Natural killer cell (primary cell): ENCODE measurements at regions of chr15 and their contacts with region 1.

Region 1: DNA sequence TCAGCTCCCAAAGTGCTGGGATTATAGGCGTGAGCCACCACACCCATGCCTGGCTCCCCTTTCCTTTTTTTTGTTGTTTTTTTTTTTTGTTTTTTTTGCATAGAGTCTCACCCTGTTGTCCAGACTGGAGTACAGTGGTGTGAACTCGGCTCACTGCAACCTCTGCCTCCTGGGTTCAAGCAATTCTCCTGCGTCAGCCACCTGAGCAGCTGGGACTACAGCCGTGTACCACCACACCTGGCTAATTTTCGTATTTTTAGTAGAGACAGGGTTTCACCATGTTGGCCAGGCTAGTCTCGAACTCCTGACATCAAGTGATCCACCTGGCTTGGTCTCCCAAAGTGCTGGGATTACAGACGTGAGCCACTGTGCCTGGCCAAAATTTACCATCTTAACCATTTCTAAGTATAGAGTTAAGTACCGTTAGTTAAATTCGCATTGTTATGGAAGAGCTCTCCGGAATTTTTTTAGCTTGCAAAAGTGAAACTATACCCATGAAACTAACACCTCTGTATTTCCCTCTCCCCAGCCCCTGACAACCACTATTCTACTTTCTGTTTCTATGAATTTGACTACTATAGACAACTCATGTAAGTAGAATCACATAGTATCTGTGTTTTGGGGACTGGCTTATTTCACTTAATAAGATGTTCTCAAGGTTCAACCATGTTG is 70.9 kb upstream of the C15orf39 start:
- DNase-seq: peak in 1 of 2 donors; percentile 55
- ATAC-seq: peak; percentile 94 to 98 (median 96)
- H3K4me3 ChIP-seq: peak overlapping the region; percentile 32
- H3K4me3 Mint-ChIP-seq: peak overlapping the region; percentile 94
- H3K27ac ChIP-seq: peak overlapping the region; percentile 94
- H3K27ac Mint-ChIP-seq: peak overlapping the region; percentile 89 to 96
- H3K4me1 ChIP-seq: peaks cover 51% of the 10 kb centered on the region
- H3K4me1 Mint-ChIP-seq: peaks cover 34 to 50% of the 10 kb centered on the region in 2 donors
- H3K27me3 ChIP-seq: no peaks in the 10 kb centered on the region
- H3K27me3 Mint-ChIP-seq: no peaks in the 10 kb centered on the region
- CTCF ChIP-seq: no peak

Region 2: DNA sequence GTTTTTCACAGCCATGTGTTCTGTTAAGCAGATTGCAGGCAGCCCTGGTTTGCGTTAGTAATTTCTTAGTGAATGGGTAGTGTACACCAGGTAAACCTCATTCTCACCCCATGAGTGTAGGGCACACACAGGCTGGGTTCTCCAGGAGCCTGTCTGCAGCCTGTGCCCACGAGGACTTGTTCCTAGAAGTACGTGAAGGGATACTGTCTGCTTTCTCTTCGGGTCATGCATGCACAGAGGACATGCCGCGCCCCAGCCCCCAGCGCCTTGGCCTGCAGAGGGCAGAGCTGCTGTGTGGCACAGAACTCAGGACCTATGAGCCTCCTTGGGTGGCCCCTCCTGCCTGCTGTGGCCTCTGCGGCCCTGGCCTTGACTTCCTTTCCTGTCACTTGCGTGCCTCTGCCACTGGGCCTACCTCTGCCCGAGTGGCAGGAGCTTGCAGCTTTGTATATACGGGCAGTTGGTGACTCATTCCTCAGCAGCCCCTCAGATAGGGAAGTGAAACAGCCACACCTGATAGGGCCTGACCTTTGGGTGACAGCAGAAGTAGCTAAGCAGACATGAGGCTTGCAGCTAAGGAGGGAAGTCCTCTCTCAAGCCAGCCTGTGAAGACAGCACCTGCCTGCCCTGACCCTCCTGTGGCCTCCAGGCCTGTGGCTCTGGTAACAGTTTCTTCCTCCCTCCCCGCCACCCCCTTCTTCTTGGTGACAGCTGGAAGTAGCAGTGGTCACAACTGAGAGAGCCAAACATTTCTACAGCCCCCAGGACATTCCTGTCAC is 87.8 kb before region 1 on chr15:
- intact Hi-C with region 1: loop called (anchors 2 kb)
- DNase-seq: peak; percentile 70 to 81
- ATAC-seq: peak; percentile 86 to 92 (median 89)
- H3K4me3 ChIP-seq: no peak overlapping the region
- H3K4me3 Mint-ChIP-seq: peak overlapping the region; percentile 39
- H3K27ac ChIP-seq: peak overlapping the region; percentile 96
- H3K27ac Mint-ChIP-seq: peak overlapping the region; percentile 86 to 89
- H3K4me1 ChIP-seq: peaks cover 67% of the 10 kb centered on the region
- H3K4me1 Mint-ChIP-seq: peaks cover 62 to 72% of the 10 kb centered on the region in 2 donors
- H3K27me3 ChIP-seq: no peaks in the 10 kb centered on the region
- H3K27me3 Mint-ChIP-seq: no peaks in the 10 kb centered on the region
- CTCF ChIP-seq: peak; percentile 61

Region 3: GRCh38 chr15:75107908-75108838 is 22.6 kb before region 1 on chr15:
- intact Hi-C with region 1: loop called (anchors 2 kb)
- DNase-seq: peak; percentile 67 to 77
- ATAC-seq: peak; percentile 85 to 97 (median 91)
- H3K4me3 ChIP-seq: no peak overlapping the region
- H3K4me3 Mint-ChIP-seq: peak overlapping the region; percentile 76
- H3K27ac ChIP-seq: peak overlapping the region; percentile 55
- H3K27ac Mint-ChIP-seq: peak overlapping the region; percentile 81 to 94
- H3K4me1 ChIP-seq: peaks cover 55% of the 10 kb centered on the region
- H3K4me1 Mint-ChIP-seq: peaks cover 45 to 61% of the 10 kb centered on the region in 2 donors
- H3K27me3 ChIP-seq: no peaks in the 10 kb centered on the region
- H3K27me3 Mint-ChIP-seq: no peaks in the 10 kb centered on the region
- CTCF ChIP-seq: no peak

Region 4: GRCh38 chr15:75182187-75183131 is 51.7 kb after region 1 on chr15:
- intact Hi-C with region 1: loop called (anchors 5 kb)
- DNase-seq: no peak
- ATAC-seq: peak; percentile 77 to 81 (median 78)
- H3K4me3 ChIP-seq: no peak overlapping the region
- H3K4me3 Mint-ChIP-seq: peak overlapping the region; percentile 64
- H3K27ac ChIP-seq: peak overlapping the region; percentile 67
- H3K27ac Mint-ChIP-seq: peak overlapping the region; percentile 84
- H3K4me1 ChIP-seq: peaks cover 32% of the 10 kb centered on the region
- H3K4me1 Mint-ChIP-seq: peaks cover 20 to 41% of the 10 kb centered on the region in 2 donors
- H3K27me3 ChIP-seq: no peaks in the 10 kb centered on the region
- H3K27me3 Mint-ChIP-seq: no peaks in the 10 kb centered on the region
- CTCF ChIP-seq: no peak

Region 5: GRCh38 chr15:75230551-75231371 is 100.0 kb after region 1 on chr15:
- intact Hi-C with region 1: no loop called
- DNase-seq: no peak
- ATAC-seq: no peak
- H3K4me3 ChIP-seq: no peak overlapping the region
- H3K4me3 Mint-ChIP-seq: no peak overlapping the region
- H3K27ac ChIP-seq: no peak overlapping the region
- H3K27ac Mint-ChIP-seq: no peak overlapping the region
- H3K4me1 ChIP-seq: no peaks in the 10 kb centered on the region
- H3K4me1 Mint-ChIP-seq: no peaks in the 10 kb centered on the region
- H3K27me3 ChIP-seq: no peaks in the 10 kb centered on the region
- H3K27me3 Mint-ChIP-seq: peaks cover 0 to 5% of the 10 kb centered on the region in 2 donors
- CTCF ChIP-seq: no peak